PC-9 (cell line): ENCODE measurements at regions of chrX and their contacts with region 1.

Region 1: GRCh38 chrX:120109378-120109777 is 6.3 kb downstream of the RHOXF1 start:
- DNase-seq: no peak
- H3K4me3 ChIP-seq: no peak overlapping the region
- H3K27ac ChIP-seq: no peak overlapping the region
- H3K4me1 ChIP-seq: no peaks in the 10 kb centered on the region
- H3K27me3 ChIP-seq: no peaks in the 10 kb centered on the region
- CTCF ChIP-seq: no peak

Region 2: GRCh38 chrX:120090208-120090607 is 19.2 kb before region 1 on chrX:
- CTCF ChIA-PET with region 1: no interaction called
- POLR2A ChIA-PET with region 1: interaction called, 10 read pairs
- intact Hi-C with region 1: no loop called
- DNase-seq: no peak
- H3K4me3 ChIP-seq: no peak overlapping the region
- H3K27ac ChIP-seq: no peak overlapping the region
- H3K4me1 ChIP-seq: no peaks in the 10 kb centered on the region
- H3K27me3 ChIP-seq: no peaks in the 10 kb centered on the region
- CTCF ChIP-seq: no peak

Region 3: GRCh38 chrX:120207009-120207615 is 97.7 kb after region 1 on chrX:
- CTCF ChIA-PET with region 1: no interaction called
- POLR2A ChIA-PET with region 1: no interaction called
- intact Hi-C with region 1: no loop called
- DNase-seq: no peak
- H3K4me3 ChIP-seq: no peak overlapping the region
- H3K27ac ChIP-seq: no peak overlapping the region
- H3K4me1 ChIP-seq: peaks cover 8% of the 10 kb centered on the region; the same call in 1 of the 2 replicates
- H3K27me3 ChIP-seq: no peaks in the 10 kb centered on the region
- CTCF ChIP-seq: no peak